ENCODE measurements at regions of chr13 and their contacts with region 1.

Region 1: DNA sequence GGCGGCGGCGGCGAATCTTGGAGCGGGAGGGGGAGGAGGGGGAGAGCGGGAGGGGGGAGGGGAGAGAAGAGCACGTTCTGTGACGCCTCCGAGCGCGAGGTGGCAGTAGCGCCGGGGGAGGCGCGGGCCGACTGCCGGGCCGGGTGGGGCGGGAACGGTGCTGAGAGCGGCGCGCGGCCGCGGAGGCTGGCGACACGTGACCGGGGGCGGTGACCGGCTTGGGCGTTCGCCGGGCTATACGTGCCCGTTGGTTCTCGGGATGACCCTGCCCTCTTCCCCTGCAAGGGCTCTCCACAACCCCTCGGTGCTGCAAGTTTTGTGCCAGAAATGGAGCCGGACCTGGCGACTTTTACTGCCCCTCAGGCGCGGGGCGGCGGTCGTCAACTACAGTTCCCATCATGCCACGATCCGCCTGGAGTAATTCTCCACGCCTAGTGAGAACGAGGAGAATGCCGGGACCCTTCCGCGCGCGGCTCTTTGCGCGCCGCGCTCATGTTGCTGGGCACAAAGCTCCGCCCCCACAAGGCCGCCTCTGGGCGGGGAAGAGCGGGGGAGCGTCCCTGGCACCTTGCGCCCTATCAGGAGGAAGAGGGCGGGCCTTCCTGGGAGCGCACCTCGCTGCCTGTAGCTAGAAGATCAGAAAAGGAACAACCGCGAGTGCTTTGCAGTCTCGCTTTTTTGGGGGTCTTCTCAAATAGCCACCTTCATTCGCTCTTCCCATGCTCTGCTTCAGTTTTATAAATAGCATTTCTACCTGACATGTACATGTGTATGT is at the start of gene KPNA3:
- DNase-seq: peak; percentile 97
- ATAC-seq: peak; percentile 95 to 97
- total RNA-seq, gene KPNA3: 39.3 to 44.9 TPM

Region 2: GRCh38 chr13:49690992-49691886 is 101.5 kb before region 1 on chr13 and contains the start of gene EBPL:
- intact Hi-C with region 1: loop called in 1 of 2 experiments (anchors 5 kb)
- DNase-seq: peak; percentile 95
- ATAC-seq: peak; percentile 99
- total RNA-seq, gene EBPL: 11.5 to 12.5 TPM